Ascending aorta (tissue), 2 donors: ENCODE measurements at regions of chr6 and their contacts with region 1.

Region 1: GRCh38 chr6:84422380-84422968 is 195.0 kb upstream of the CEP162 start:
- DNase-seq: peak in 1 of 2 donors; percentile 81
- H3K4me3 ChIP-seq: peak overlapping the region in 1 of 2 donors; percentile 8
- H3K27ac ChIP-seq: no peak overlapping the region
- H3K4me1 ChIP-seq: peaks cover 0 to 11% of the 10 kb centered on the region in 2 donors
- H3K27me3 ChIP-seq: no peaks in the 10 kb centered on the region
- CTCF ChIP-seq: peak; percentile 73 to 88 (median 76)

Region 2: GRCh38 chr6:84597238-84597875 is 174.9 kb after region 1 on chr6:
- intact Hi-C with region 1: no loop called
- DNase-seq: no peak
- H3K4me3 ChIP-seq: peak overlapping the region; percentile 20 to 48
- H3K27ac ChIP-seq: no peak overlapping the region
- H3K4me1 ChIP-seq: no peaks in the 10 kb centered on the region
- H3K27me3 ChIP-seq: no peaks in the 10 kb centered on the region
- CTCF ChIP-seq: no peak

Region 3: DNA sequence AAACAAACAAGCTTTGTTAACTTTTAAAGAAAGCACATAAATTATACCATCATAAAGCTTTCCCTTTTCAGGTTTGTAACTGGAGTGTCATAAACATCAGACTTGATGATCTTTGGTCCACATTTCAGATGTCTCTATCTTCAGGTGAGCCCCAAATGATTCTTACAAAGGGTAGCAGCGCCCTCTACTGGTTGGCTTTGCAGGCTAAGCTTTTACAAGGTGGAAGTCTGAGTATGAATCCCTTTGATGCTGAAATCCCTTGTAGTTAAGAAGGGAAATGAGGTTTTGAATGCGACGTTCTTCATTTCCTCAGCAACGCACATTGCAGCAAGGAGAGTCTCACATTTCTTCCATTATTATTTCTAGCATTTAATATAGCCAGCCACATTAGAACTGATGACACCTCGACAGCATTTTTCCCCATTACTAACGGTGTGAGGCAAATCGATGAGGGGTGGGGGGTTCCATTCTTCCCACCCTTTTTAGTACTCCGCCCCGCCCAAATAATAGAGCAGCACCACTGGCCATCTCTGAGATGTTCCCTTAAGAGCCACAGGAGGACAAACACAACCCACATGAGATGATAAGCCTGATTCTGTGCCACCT is 901.1 kb after region 1 on chr6:
- intact Hi-C with region 1: loop called (anchors 2 kb)
- DNase-seq: peak in 1 of 2 donors; percentile 84
- H3K4me3 ChIP-seq: no peak overlapping the region
- H3K27ac ChIP-seq: no peak overlapping the region
- H3K4me1 ChIP-seq: no peaks in the 10 kb centered on the region
- H3K27me3 ChIP-seq: no peaks in the 10 kb centered on the region
- CTCF ChIP-seq: peak; percentile 46 to 74 (median 67)